ENCODE measurements at regions of chr9 and their contacts with region 1.

Region 1: GRCh38 chr9:1009101-1009707 is 32.7 kb downstream of the DMRT3 start:
- DNase-seq: no peak
- ATAC-seq: peak; percentile 98
- H3K4me3 ChIP-seq: no peak overlapping the region
- H3K27ac ChIP-seq: no peak overlapping the region
- H3K4me1 ChIP-seq: peaks cover 7% of the 10 kb centered on the region
- H3K27me3 ChIP-seq: no peaks in the 10 kb centered on the region
- CTCF ChIP-seq: peak; percentile 98
- EP300 ChIP-seq: no peak
- POLR2A ChIP-seq: no peak
- RAD21 ChIP-seq: peak; percentile 96

Region 2: DNA sequence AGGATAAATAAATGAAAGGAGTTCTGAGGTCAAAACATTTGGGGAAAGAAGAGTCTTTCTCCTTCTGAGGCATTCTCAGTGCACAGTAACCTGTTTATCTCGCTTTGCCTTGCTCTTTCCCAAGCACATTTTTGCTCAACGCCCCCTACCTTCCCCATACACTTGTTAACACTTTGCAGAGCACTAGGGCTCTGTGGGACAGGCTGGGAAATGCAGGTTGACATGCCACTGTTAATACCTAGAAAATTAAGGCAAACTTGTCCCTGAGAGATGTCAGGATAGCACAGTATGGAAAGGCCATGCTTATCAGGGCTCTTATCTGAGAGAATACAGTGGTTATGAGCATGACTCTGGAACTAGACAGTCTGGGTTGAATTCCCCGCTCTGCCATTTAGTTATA is 642.6 kb before region 1 on chr9:
- CTCF ChIA-PET with region 1: no interaction called
- POLR2A ChIA-PET with region 1: no interaction called
- RAD21 ChIA-PET with region 1: no interaction called
- SMC1A ChIA-PET with region 1: no interaction called
- in situ Hi-C with region 1: no loop called
- intact Hi-C with region 1: no loop called
- DNase-seq: no peak
- ATAC-seq: no peak
- H3K4me3 ChIP-seq: no peak overlapping the region
- H3K27ac ChIP-seq: no peak overlapping the region
- H3K4me1 ChIP-seq: no peaks in the 10 kb centered on the region
- H3K27me3 ChIP-seq: no peaks in the 10 kb centered on the region
- CTCF ChIP-seq: no peak
- EP300 ChIP-seq: no peak
- POLR2A ChIP-seq: no peak
- RAD21 ChIP-seq: no peak

Region 3: DNA sequence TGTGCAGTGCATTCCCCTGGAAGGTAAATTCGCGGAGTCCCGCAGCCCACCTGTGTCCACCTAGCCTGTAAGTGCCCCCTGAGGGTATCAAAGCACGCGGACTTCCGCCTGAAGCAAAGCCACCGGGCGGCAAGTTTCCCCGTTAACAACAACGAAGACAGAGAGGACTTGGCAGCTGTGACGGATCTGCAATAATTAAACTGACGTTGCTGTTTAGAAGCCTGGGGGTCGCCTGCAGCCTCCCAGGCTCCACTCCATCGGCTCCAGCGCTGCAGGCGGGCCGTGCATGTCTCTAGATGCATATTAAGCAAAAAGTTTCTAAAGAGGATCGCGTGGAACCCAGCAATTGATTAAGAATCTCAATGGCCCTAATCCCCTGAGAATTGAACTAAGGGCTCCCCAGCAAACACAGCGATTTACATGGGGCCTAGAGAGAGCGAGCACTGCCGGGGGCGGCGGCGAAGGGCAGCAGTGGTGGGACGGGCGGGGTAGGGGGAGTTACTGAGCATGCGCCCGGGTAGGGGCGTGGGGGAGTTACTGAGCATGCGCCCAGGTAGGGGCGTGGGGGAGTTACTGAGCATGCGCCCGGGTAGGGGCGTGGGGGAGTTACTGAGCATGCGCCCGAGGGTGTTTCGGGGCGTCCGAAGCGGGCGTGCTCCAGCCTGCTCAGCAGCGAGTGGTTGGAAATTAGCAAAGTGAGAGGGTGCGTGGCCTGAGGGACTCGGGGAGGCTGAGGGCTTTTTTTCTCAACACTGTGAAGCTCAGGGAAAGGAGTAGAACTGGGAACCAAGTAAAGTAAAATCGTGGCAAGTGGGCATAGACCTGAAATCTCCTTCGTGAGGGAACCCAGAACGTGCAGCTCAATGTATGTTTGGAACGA is 539.3 kb before region 1 on chr9:
- CTCF ChIA-PET with region 1: interaction called, 3 read pairs
- POLR2A ChIA-PET with region 1: no interaction called
- RAD21 ChIA-PET with region 1: interaction called, 3 read pairs
- SMC1A ChIA-PET with region 1: interaction called, 3 read pairs
- in situ Hi-C with region 1: no loop called
- intact Hi-C with region 1: loop called (anchors 10 kb)
- DNase-seq: peak; percentile 72
- ATAC-seq: peak; percentile 97
- H3K4me3 ChIP-seq: peak overlapping the region; percentile 88
- H3K27ac ChIP-seq: peak overlapping the region; percentile 81
- H3K4me1 ChIP-seq: peaks cover 18% of the 10 kb centered on the region
- H3K27me3 ChIP-seq: no peaks in the 10 kb centered on the region
- CTCF ChIP-seq: no peak
- EP300 ChIP-seq: no peak
- POLR2A ChIP-seq: peak; percentile 80
- RAD21 ChIP-seq: no peak

Region 4: DNA sequence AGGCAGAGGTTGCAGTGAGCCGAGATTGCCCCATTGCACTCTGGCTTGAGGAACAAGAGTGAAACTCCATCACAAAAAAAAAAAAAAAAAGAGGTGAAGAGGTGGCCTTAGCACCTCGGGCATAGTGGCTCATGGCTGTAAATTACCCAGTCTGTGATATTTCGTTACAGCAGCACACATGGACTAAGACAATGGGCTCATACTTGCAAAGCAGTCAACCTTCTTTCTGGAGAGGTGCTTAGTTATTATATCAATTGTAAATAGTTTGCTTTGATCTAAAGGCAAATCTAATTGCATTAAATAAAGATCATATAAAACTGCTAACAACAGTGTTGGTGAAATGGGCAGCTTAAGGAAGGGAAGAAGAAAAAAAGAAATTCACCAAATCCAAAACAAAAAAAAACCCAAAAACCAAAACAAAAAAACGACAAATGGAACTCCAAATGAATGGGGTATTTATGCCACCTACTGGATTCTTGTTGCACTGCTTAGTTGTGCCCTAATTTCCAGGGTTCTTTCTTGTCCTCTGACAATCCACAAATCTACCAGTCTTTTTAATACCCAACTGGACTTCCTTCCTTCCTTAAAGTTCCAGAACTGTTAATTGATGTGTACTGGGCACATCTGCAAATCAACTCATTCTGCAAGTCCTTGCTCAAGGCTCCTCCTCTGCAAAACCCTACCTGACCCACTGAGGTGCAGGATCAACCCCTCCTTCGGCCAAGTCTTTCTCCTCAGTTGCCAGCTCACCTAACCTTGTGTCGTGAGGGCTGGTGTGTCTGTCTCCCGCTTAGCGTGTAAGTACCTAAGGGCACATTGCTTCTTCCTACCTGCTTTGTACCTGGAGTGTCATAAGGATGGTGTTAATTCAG is 202.7 kb before region 1 on chr9:
- CTCF ChIA-PET with region 1: interaction called, 13 read pairs
- POLR2A ChIA-PET with region 1: no interaction called
- RAD21 ChIA-PET with region 1: no interaction called
- SMC1A ChIA-PET with region 1: no interaction called
- in situ Hi-C with region 1: no loop called
- intact Hi-C with region 1: loop called (anchors 10 kb)
- DNase-seq: peak; percentile 4
- ATAC-seq: peak; percentile 83
- H3K4me3 ChIP-seq: no peak overlapping the region
- H3K27ac ChIP-seq: no peak overlapping the region
- H3K4me1 ChIP-seq: no peaks in the 10 kb centered on the region
- H3K27me3 ChIP-seq: peaks cover 0 to 2% of the 10 kb centered on the region in 2 experiments; a peak in 2 of 4 replicates
- CTCF ChIP-seq: peak; percentile 61 to 73 (median 61)
- EP300 ChIP-seq: no peak
- POLR2A ChIP-seq: no peak
- RAD21 ChIP-seq: peak; percentile 79

Region 5: DNA sequence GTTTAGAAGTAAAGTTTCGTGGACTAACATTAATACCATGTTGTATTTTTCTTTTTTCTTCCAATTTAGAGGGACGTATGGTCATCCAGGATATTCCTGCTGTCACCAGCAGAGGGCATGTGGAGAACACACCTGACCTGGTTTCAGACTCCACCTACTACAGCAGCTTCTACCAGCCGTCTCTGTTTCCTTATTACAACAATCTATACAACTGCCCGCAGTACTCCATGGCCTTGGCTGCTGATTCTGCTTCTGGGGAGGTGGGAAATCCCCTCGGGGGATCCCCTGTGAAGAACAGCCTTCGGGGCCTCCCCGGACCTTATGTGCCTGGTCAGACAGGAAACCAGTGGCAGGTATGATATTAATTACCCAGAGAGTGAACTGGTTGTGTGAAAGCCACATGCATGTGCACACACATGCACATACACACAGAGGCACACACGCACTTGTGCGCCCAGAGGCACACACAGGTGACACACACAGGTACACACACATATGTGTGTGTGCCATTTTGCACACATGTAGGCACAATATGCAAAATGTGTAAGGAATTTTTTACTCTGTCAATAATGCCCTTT is 115.3 kb before region 1 on chr9:
- CTCF ChIA-PET with region 1: interaction called, 153 read pairs
- POLR2A ChIA-PET with region 1: no interaction called
- RAD21 ChIA-PET with region 1: interaction called, 43 read pairs
- SMC1A ChIA-PET with region 1: interaction called, 92 read pairs
- in situ Hi-C with region 1: loop called (anchors 5 kb)
- intact Hi-C with region 1: loop called (anchors 2 kb)
- DNase-seq: peak; percentile 91
- ATAC-seq: peak; percentile 99
- H3K4me3 ChIP-seq: no peak overlapping the region
- H3K27ac ChIP-seq: no peak overlapping the region
- H3K4me1 ChIP-seq: peaks cover 11% of the 10 kb centered on the region
- H3K27me3 ChIP-seq: no peaks in the 10 kb centered on the region
- CTCF ChIP-seq: peak; percentile 76 to 96 (median 84); a peak in 5 of 6 replicates
- EP300 ChIP-seq: peak; percentile 86 to 92; a peak in 3 of 4 replicates
- POLR2A ChIP-seq: no peak
- RAD21 ChIP-seq: peak; percentile 89

Region 6: GRCh38 chr9:994005-994404 is 15.2 kb before region 1 on chr9:
- CTCF ChIA-PET with region 1: interaction called, 15 read pairs
- POLR2A ChIA-PET with region 1: no interaction called
- RAD21 ChIA-PET with region 1: interaction called, 4 read pairs
- SMC1A ChIA-PET with region 1: interaction called, 7 read pairs
- in situ Hi-C with region 1: no loop called
- intact Hi-C with region 1: no loop called
- DNase-seq: no peak
- ATAC-seq: peak; percentile 81
- H3K4me3 ChIP-seq: no peak overlapping the region
- H3K27ac ChIP-seq: no peak overlapping the region
- H3K4me1 ChIP-seq: peaks cover 6% of the 10 kb centered on the region
- H3K27me3 ChIP-seq: 0 out of 4 replicates have a peak, but pooled peaks cover 0 to 2% of the 10 kb centered on the region in 2 experiments
- CTCF ChIP-seq: no peak
- EP300 ChIP-seq: no peak
- POLR2A ChIP-seq: no peak
- RAD21 ChIP-seq: no peak

Region 7: GRCh38 chr9:1154739-1155138 is 145.5 kb after region 1 on chr9:
- CTCF ChIA-PET with region 1: no interaction called
- POLR2A ChIA-PET with region 1: no interaction called
- RAD21 ChIA-PET with region 1: no interaction called
- SMC1A ChIA-PET with region 1: no interaction called
- in situ Hi-C with region 1: no loop called
- intact Hi-C with region 1: no loop called
- DNase-seq: no peak
- ATAC-seq: no peak
- H3K4me3 ChIP-seq: no peak overlapping the region
- H3K27ac ChIP-seq: no peak overlapping the region
- H3K4me1 ChIP-seq: no peaks in the 10 kb centered on the region
- H3K27me3 ChIP-seq: no peaks in the 10 kb centered on the region
- CTCF ChIP-seq: no peak
- EP300 ChIP-seq: no peak
- POLR2A ChIP-seq: no peak
- RAD21 ChIP-seq: no peak

Region 8: DNA sequence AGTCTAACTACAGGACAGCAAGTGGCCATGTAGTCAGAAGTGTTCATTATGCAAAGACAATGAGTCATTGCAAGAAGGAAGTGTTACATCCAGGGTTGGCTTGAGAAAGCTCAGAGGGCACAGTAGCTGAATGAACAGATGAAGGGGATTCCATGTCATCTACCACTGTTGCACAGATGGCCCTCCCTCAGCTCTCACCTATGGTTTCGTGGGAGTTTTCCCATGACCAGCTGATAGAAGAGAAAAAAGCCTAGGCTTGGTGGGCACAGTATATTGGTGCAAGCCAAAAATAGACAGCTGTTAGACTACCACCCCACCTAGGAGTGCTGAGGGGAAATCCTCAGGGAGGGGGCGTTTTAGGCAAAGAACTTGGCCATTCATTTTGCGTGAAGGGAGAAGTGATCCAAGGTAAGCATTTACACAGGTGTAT is 258.0 kb after region 1 on chr9:
- CTCF ChIA-PET with region 1: interaction called, 17 read pairs
- POLR2A ChIA-PET with region 1: no interaction called
- RAD21 ChIA-PET with region 1: interaction called, 6 read pairs
- SMC1A ChIA-PET with region 1: interaction called, 12 read pairs
- in situ Hi-C with region 1: no loop called
- intact Hi-C with region 1: no loop called
- DNase-seq: peak; percentile 55
- ATAC-seq: peak; percentile 85
- H3K4me3 ChIP-seq: no peak overlapping the region
- H3K27ac ChIP-seq: no peak overlapping the region
- H3K4me1 ChIP-seq: no peaks in the 10 kb centered on the region; the same call in 1 of the 2 replicates
- H3K27me3 ChIP-seq: no peaks in the 10 kb centered on the region
- CTCF ChIP-seq: no peak
- EP300 ChIP-seq: peak; percentile 66 to 79; a peak in 3 of 4 replicates
- POLR2A ChIP-seq: no peak
- RAD21 ChIP-seq: no peak

Region 9: GRCh38 chr9:1429297-1429696 is 420.1 kb after region 1 on chr9:
- CTCF ChIA-PET with region 1: interaction called, 24 read pairs
- POLR2A ChIA-PET with region 1: no interaction called
- RAD21 ChIA-PET with region 1: interaction called, 21 read pairs
- SMC1A ChIA-PET with region 1: interaction called, 21 read pairs
- in situ Hi-C with region 1: no loop called
- intact Hi-C with region 1: no loop called
- DNase-seq: no peak
- ATAC-seq: peak; percentile 77
- H3K4me3 ChIP-seq: no peak overlapping the region
- H3K27ac ChIP-seq: no peak overlapping the region
- H3K4me1 ChIP-seq: no peaks in the 10 kb centered on the region
- H3K27me3 ChIP-seq: no peaks in the 10 kb centered on the region
- CTCF ChIP-seq: peak in 2 of 3 experiments; percentile 5 to 52; a peak in 2 of 6 replicates
- EP300 ChIP-seq: no peak
- POLR2A ChIP-seq: no peak
- RAD21 ChIP-seq: peak; percentile 21; the same call in 1 of the 2 replicates